Activated CD4-positive, alpha-beta T cell treated with anti-CD3 and anti-CD28 coated beads for 36 hours (primary cell): ENCODE measurements at regions of chr22 and their contacts with region 1.

Region 1: DNA sequence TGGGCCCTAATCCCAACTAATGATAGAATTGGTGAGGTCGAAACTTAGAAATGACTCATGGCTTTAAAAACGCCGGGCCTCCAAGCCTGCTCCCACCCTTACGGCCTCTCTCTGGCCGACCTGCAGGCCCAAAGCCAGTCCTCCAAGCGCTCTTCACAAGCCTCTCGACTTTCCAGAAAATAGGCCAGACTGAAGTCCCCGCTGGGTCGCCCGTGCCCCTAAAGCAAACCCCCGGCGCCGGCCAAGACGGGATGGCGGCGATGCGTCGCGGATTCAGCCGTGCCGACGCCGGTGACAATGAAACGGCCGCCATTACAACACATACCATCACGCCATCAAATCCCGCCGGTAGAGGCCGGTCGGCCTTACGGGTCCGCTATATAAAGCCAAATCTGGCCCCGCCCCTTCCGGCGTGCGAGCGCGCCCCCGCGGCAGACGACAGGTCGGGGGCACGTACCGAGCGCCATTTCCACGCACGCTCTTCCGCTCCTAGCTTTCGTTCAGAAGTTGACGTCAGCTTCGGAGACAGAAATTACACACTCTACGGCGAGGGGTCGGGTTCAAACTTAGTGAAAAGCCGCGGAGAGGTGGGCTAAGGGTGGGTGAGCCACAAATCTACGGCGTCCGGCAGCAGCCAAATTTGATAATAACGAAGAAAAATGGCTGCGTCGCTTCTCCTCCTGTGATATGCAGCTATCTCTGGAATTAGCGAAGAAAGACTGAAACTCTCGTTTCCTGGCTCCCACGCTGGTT is at the start of gene RPL3:
- DNase-seq: peak; percentile 98
- ATAC-seq: peak; percentile 83
- H3K4me3 Mint-ChIP-seq: peak within 1 kb of the TSS; percentile 100
- H3K27ac Mint-ChIP-seq: peak within 1 kb of the TSS; percentile 100
- H3K4me1 Mint-ChIP-seq: peaks cover 32% of the 10 kb centered on the region
- H3K27me3 Mint-ChIP-seq: no peaks in the 10 kb centered on the region
- total RNA-seq, gene RPL3: 2,519 to 3,155 TPM

Region 2: DNA sequence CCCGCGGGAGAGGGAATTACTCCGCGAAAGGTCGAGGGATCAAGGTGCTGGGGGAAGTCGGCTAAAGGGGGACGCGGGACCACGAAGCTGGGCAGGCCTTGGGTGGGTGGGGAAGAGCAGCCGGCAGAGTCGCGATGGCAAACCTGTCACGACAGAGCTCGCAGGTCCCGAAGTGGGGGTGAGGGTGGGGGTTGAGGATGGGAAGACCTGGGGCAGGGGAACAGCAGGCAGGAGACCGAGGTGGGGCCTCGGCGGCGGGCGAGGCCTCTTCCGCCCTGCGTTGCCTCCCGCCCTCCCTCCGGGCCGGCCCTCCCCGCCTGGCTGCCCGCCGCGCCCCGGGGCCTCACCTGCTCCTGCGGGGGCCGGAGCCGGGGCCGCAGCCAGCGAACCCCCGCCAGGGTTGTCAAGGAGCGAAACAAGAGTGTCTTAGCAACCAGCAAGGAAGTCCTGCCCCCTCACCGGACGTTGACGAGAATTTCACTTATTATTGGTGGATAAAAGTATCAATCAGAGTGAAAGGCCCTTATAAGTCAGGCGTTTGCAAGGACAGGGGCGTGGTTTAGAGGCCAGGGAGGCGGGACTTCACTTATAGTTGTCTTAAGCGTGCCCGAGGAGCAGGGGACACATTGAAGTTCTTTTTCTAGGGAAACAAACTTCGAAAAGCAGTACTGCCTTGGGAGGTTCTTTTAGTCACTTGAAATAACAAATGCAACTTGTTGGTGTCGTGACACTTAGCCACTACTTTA is 525.6 kb before region 1 on chr22 and contains the start of gene DNAL4:
- CTCF ChIA-PET with region 1: no interaction called
- POLR2A ChIA-PET with region 1: no interaction called
- intact Hi-C with region 1: loop called in 1 of 2 experiments (anchors 1 kb)
- DNase-seq: peak; percentile 94
- ATAC-seq: peak; percentile 98
- H3K4me3 Mint-ChIP-seq: peak within 1 kb of the TSS; percentile 84
- H3K27ac Mint-ChIP-seq: peak within 1 kb of the TSS; percentile 67
- H3K4me1 Mint-ChIP-seq: peaks cover 26% of the 10 kb centered on the region
- H3K27me3 Mint-ChIP-seq: no peaks in the 10 kb centered on the region
- total RNA-seq, gene DNAL4: 7.4 to 8.0 TPM

Region 3: GRCh38 chr22:39170825-39171622 is 148.4 kb before region 1 on chr22:
- CTCF ChIA-PET with region 1: interaction called, 37 read pairs
- POLR2A ChIA-PET with region 1: interaction called, 7 read pairs
- intact Hi-C with region 1: loop called in 1 of 2 experiments (anchors 1 kb)
- DNase-seq: peak; percentile 92
- ATAC-seq: peak; percentile 83
- H3K4me3 Mint-ChIP-seq: no peak overlapping the region
- H3K27ac Mint-ChIP-seq: no peak overlapping the region
- H3K4me1 Mint-ChIP-seq: peaks cover 42% of the 10 kb centered on the region
- H3K27me3 Mint-ChIP-seq: no peaks in the 10 kb centered on the region

Region 4: GRCh38 chr22:39332441-39333064 is 13.1 kb after region 1 on chr22:
- CTCF ChIA-PET with region 1: interaction called, 11 read pairs
- POLR2A ChIA-PET with region 1: interaction called, 18 read pairs
- intact Hi-C with region 1: no loop called
- DNase-seq: no peak
- ATAC-seq: peak; percentile 74
- H3K4me3 Mint-ChIP-seq: no peak overlapping the region
- H3K27ac Mint-ChIP-seq: peak overlapping the region; percentile 3
- H3K4me1 Mint-ChIP-seq: peaks cover 15% of the 10 kb centered on the region
- H3K27me3 Mint-ChIP-seq: no peaks in the 10 kb centered on the region

Region 5: DNA sequence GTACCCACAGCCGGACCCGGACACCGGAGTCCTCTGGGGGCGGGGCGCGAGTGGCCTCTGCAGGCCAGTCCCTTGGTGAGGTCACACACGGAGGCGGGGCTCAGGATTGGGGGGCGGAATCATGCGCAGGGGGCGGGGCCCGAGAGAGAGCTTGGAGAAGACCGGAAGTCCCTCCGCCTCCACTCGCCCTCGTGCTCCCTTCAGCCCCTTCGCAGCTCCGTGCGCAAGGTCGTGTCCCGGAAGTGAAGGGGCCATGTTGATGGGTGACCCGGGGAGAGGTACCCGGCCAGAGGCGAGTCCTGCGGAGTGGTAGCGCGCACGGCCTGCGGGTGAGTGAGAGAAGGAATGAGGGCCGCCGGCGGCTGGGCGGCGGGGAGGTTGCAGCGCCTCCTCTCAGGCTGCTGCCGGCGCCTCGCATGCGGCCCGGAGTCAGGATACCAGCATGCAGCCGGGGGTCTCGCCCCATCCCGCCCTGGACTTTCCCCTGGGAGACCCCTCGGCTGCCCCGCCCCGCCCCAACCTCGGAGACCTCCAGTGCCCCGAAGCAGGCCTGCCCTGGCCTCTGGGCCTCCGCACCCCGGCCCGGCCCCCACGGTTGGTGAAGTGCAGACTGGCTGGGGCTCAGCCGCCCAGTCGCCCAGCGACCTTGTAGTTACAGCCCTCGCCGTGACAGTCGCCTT is 182.8 kb after region 1 on chr22 and contains the start of gene MIEF1:
- CTCF ChIA-PET with region 1: interaction called, 4 read pairs
- POLR2A ChIA-PET with region 1: interaction called, 15 read pairs
- intact Hi-C with region 1: loop called in 1 of 2 experiments (anchors 1 kb)
- DNase-seq: peak; percentile 98
- ATAC-seq: peak; percentile 98
- H3K4me3 Mint-ChIP-seq: peak within 1 kb of the TSS; percentile 76
- H3K27ac Mint-ChIP-seq: peak within 1 kb of the TSS; percentile 94
- H3K4me1 Mint-ChIP-seq: peaks cover 35% of the 10 kb centered on the region
- H3K27me3 Mint-ChIP-seq: no peaks in the 10 kb centered on the region
- total RNA-seq, gene MIEF1: 43.2 to 44.9 TPM

Region 6: DNA sequence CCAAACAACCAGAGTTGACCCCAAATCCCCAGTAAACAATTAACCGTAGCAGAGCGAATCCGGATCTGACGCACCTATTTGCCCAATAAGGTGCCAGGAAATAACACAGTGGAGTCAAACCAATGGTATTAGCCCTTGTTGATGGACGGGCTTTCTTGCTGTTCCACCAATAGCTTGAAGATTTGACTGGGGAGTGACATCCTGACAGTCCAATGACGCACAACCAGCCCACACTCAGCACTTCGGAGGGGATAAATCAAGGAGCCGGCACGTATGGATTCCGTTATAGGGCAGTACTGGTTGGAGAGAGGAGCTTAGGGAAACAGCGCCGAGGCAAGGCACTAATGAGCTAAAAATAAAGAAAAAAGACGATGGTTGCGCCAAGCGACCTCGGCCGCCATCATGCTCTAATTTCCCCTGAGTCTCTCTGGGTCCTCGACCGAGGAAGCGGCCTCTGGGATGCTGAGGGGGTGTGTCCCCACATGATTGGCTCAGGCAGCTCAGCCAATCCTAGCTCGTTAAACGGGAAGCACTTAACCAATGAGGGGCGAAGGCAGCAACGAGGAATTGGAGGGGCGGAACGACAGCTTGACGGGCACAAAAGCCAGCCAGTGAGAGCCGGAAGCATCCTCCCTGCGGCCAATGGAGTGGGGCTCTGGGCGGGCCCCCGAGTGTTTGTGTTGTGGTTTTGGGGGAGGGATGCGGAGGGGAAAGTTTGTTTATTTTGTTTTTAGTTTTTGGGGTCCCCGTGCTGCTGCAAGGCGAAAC is 724.8 kb after region 1 on chr22:
- CTCF ChIA-PET with region 1: no interaction called
- POLR2A ChIA-PET with region 1: interaction called, 8 read pairs
- intact Hi-C with region 1: loop called in 1 of 2 experiments (anchors 1 kb)
- DNase-seq: peak; percentile 98
- ATAC-seq: peak; percentile 91
- H3K4me3 Mint-ChIP-seq: peak overlapping the region; percentile 87
- H3K27ac Mint-ChIP-seq: peak overlapping the region; percentile 99
- H3K4me1 Mint-ChIP-seq: peaks cover 24% of the 10 kb centered on the region
- H3K27me3 Mint-ChIP-seq: peaks cover 2% of the 10 kb centered on the region